ENCODE measurements at regions of chr2 and their contacts with region 1.

Region 1: GRCh38 chr2:152025678-152026287 is 73.1 kb downstream of the CACNB4 start:
- DNase-seq: peak; percentile 65
- ATAC-seq: peak; percentile 94
- H3K4me3 ChIP-seq: peak overlapping the region in 1 of 2 experiments; percentile 46; a peak in 2 of 4 replicates
- H3K27ac ChIP-seq: no peak overlapping the region
- H3K4me1 ChIP-seq: peaks cover 6 to 25% of the 10 kb centered on the region in 2 experiments
- H3K27me3 ChIP-seq: no peaks in the 10 kb centered on the region
- CTCF ChIP-seq: peak; percentile 97 to 99 (median 99)
- POLR2A ChIP-seq: no peak
- RAD21 ChIP-seq: peak; percentile 81

Region 2: GRCh38 chr2:151771599-151772358 is 254.0 kb before region 1 on chr2:
- CTCF ChIA-PET with region 1: no interaction called
- POLR2A ChIA-PET with region 1: no interaction called
- RAD21 ChIA-PET with region 1: no interaction called
- intact Hi-C with region 1: loop called (anchors 10 kb)
- DNase-seq: no peak
- ATAC-seq: no peak
- H3K4me3 ChIP-seq: no peak overlapping the region
- H3K27ac ChIP-seq: no peak overlapping the region
- H3K4me1 ChIP-seq: peaks cover 13 to 26% of the 10 kb centered on the region in 2 experiments
- H3K27me3 ChIP-seq: no peaks in the 10 kb centered on the region
- CTCF ChIP-seq: no peak
- POLR2A ChIP-seq: no peak
- RAD21 ChIP-seq: no peak

Region 3: DNA sequence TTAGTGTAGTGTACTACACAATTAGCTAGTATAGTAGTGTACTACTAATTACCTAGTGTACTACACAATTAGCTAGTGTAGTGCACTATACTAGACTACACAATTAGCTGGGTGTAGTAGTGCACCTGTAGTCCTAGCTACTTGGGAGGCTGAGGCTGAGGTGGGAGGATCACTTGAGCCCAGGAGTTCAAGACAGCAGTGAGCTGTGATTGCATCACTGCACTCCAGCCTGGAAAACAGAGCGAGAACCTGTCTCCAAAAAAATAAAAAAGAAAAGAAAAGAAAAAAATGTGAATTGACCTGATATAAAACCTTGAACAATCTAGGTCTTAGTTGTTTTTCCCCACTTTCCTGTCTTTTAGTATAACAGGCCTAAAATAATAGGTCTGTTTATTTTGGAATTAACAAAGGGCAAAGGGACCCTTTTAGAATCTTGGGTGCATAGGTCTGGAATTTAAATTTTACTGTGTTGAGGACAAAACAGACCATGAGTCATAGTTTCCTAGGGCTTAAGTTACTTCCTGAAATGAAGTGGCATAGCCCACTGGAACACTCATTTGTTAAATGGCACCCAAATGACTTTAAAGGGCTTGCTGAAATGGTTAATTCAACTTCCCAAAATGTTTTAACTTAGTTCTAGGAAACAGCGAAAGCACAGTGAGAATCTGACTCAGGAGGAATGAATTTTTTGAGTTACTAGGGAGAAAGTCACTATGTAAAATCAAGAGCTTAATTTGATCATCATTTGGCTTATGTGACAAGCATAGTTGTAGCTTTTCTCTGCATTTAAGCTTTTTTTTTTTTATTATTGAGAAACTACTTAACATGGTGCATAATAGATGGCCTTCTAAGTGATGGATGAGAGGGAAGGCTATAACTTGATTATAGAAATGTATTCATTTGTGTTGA is 146.9 kb before region 1 on chr2:
- CTCF ChIA-PET with region 1: no interaction called
- POLR2A ChIA-PET with region 1: no interaction called
- RAD21 ChIA-PET with region 1: no interaction called
- intact Hi-C with region 1: no loop called
- DNase-seq: peak; percentile 46
- ATAC-seq: peak; percentile 49
- H3K4me3 ChIP-seq: no peak overlapping the region
- H3K27ac ChIP-seq: no peak overlapping the region
- H3K4me1 ChIP-seq: peaks cover 7 to 11% of the 10 kb centered on the region in 2 experiments; a peak in 3 of 4 replicates
- H3K27me3 ChIP-seq: no peaks in the 10 kb centered on the region
- CTCF ChIP-seq: no peak
- POLR2A ChIP-seq: no peak
- RAD21 ChIP-seq: 0 out of 2 replicates have a peak, but pooled peaks have one; percentile 13

Region 4: DNA sequence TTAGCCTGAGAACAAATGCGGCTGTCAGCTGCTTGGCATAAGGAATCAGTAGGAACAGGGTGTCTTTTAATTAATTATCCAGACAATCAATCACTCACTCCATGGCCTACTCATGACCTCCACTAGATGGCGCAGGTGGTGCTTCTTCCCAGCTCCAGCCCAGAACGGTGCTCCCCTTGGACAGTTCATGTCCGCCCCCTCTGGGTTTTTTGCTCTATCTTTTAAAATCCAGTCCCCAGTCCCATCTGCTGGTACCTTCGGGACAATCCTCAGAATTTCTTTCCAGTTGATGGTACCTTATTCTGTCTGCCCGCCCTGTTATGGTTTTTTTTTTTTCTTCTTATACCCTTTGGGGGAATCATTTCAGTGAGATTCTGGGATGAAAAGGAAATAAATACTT is 26.7 kb before region 1 on chr2:
- CTCF ChIA-PET with region 1: interaction called, 15 read pairs
- POLR2A ChIA-PET with region 1: no interaction called
- RAD21 ChIA-PET with region 1: no interaction called
- intact Hi-C with region 1: loop called (anchors 1 kb)
- DNase-seq: peak; percentile 62
- ATAC-seq: peak; percentile 98
- H3K4me3 ChIP-seq: no peak overlapping the region
- H3K27ac ChIP-seq: no peak overlapping the region
- H3K4me1 ChIP-seq: no peaks in the 10 kb centered on the region
- H3K27me3 ChIP-seq: no peaks in the 10 kb centered on the region
- CTCF ChIP-seq: peak; percentile 88 to 91 (median 88)
- POLR2A ChIP-seq: no peak
- RAD21 ChIP-seq: peak; percentile 69

Region 5: GRCh38 chr2:152062125-152063091 is 36.6 kb after region 1 on chr2:
- CTCF ChIA-PET with region 1: no interaction called
- POLR2A ChIA-PET with region 1: no interaction called
- RAD21 ChIA-PET with region 1: no interaction called
- intact Hi-C with region 1: no loop called
- DNase-seq: no peak
- ATAC-seq: no peak
- H3K4me3 ChIP-seq: no peak overlapping the region
- H3K27ac ChIP-seq: no peak overlapping the region
- H3K4me1 ChIP-seq: no peaks in the 10 kb centered on the region
- H3K27me3 ChIP-seq: no peaks in the 10 kb centered on the region
- CTCF ChIP-seq: no peak
- POLR2A ChIP-seq: no peak
- RAD21 ChIP-seq: no peak

Region 6: DNA sequence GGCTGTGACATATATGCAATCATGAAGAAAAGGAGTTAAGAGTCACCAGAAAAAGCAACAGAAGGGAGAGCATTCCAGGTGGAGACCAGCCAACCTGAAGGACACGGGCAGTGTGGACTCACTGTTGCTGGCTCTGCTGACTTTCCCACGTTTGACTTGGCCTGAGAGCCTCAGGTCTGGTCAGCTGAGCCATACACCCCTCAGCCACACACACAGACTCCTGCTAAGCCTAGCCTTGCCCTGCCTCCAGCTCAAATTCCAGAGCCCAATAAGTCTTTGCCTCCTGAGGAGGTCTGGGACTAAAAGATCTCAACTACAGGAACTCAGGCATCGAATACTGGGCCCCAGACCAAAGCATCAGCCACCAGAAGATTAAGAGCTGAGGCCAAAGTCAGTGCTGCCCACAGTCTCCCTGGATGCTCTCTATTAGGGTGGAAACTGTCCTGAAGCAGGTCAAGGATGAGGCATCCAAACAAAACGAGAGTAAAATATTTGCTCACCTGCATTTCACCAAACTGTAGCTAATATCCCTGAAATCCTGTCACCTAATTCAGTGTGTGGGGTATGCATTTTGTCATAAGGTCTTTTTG is 49.8 kb after region 1 on chr2:
- CTCF ChIA-PET with region 1: no interaction called
- POLR2A ChIA-PET with region 1: no interaction called
- RAD21 ChIA-PET with region 1: no interaction called
- intact Hi-C with region 1: no loop called
- DNase-seq: no peak
- ATAC-seq: no peak
- H3K4me3 ChIP-seq: no peak overlapping the region
- H3K27ac ChIP-seq: no peak overlapping the region
- H3K4me1 ChIP-seq: no peaks in the 10 kb centered on the region
- H3K27me3 ChIP-seq: no peaks in the 10 kb centered on the region
- CTCF ChIP-seq: no peak
- POLR2A ChIP-seq: no peak
- RAD21 ChIP-seq: no peak